ENCODE measurements at regions of chr21 and their contacts with region 1.

Region 1: GRCh38 chr21:25895565-25896205 is 160.9 kb downstream of the GABPA start:
- DNase-seq: peak in 19 of 42 donors; percentile 23 to 75 (median 44)

Region 2: GRCh38 chr21:25626757-25627156 is 268.9 kb before region 1 on chr21:
- intact Hi-C with region 1: no loop called
- DNase-seq: peak in 7 of 42 donors; percentile 14 to 57 (median 25)

Region 3: DNA sequence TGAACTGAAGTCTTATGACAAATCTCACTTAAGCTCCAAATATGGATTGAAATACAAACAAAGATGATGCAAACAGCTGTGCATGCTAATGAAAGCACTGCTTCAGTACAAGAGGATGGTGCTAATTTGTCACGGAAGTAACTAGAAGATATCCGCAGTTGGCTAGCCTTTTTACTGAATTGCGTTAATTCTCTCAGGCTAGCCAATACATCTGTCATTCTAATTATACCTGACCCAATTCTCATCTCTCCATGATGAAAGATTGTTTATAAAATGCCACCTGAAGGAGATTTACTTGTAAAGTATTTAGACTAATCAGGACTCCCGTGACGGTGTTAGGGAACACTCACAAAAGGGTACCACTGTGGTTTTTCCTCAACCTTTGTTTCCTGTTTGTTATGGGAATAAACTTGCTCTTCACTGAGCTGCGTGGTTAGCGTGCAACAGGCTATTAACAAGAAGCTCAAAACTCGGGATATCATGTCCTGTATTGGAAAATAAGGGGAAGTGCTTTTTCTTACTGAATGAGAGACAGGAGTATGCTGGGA is 112.3 kb after region 1 on chr21:
- intact Hi-C with region 1: loop called (anchors 10 kb)
- DNase-seq: no peak